ENCODE measurements at regions of chr17 and their contacts with region 1.

Region 1: GRCh38 chr17:76671123-76671911 is 27.8 kb upstream of the ST6GALNAC1 start:
- DNase-seq: peak; percentile 100
- ATAC-seq: peak; percentile 97 to 99
- H3K4me3 ChIP-seq: peak overlapping the region; percentile 54
- H3K27ac ChIP-seq: peak overlapping the region; percentile 85 to 91
- H3K4me1 ChIP-seq: peaks cover 15% of the 10 kb centered on the region
- CTCF ChIP-seq: no peak
- EP300 ChIP-seq: no peak
- POLR2A ChIP-seq: peak; percentile 66
- RAD21 ChIP-seq: no peak

Region 2: GRCh38 chr17:76720976-76721375 is 49.7 kb after region 1 on chr17:
- CTCF ChIA-PET with region 1: no interaction called
- POLR2A ChIA-PET with region 1: no interaction called
- DNase-seq: no peak
- ATAC-seq: no peak
- H3K4me3 ChIP-seq: no peak overlapping the region
- H3K27ac ChIP-seq: no peak overlapping the region
- H3K4me1 ChIP-seq: peaks cover 8% of the 10 kb centered on the region; the same call in 2 of the 3 replicates
- CTCF ChIP-seq: no peak
- EP300 ChIP-seq: no peak
- POLR2A ChIP-seq: no peak
- RAD21 ChIP-seq: no peak

Region 3: DNA sequence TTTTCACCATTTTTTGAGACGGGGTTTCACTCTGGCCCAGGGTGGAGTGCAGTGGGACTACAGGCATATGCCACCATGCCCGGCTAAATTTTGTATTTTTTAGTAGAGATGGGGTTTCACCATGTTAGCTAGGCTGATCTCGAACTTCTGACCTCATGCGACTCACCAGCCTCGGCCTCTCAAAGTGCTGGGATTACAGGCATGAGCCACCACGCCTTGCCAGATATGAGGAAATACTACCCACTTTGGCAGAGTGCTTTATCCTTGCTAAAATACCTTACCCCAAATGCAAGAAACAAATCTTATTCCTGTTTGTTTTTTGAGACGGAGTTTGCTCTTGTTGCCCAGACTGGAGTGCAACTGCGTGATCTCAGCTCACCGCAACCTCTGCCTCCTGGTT is 134.0 kb after region 1 on chr17:
- CTCF ChIA-PET with region 1: no interaction called
- POLR2A ChIA-PET with region 1: no interaction called
- DNase-seq: peak in 1 of 2 experiments; percentile 47
- ATAC-seq: peak in 1 of 2 experiments; percentile 42; a peak in 1 of 6 replicates
- H3K4me3 ChIP-seq: no peak overlapping the region
- H3K27ac ChIP-seq: peak overlapping the region in 1 of 2 experiments; percentile 33; a peak in 1 of 6 replicates
- H3K4me1 ChIP-seq: peaks cover 8% of the 10 kb centered on the region; the same call in 2 of the 3 replicates
- CTCF ChIP-seq: no peak
- EP300 ChIP-seq: no peak
- POLR2A ChIP-seq: no peak
- RAD21 ChIP-seq: no peak

Region 4: DNA sequence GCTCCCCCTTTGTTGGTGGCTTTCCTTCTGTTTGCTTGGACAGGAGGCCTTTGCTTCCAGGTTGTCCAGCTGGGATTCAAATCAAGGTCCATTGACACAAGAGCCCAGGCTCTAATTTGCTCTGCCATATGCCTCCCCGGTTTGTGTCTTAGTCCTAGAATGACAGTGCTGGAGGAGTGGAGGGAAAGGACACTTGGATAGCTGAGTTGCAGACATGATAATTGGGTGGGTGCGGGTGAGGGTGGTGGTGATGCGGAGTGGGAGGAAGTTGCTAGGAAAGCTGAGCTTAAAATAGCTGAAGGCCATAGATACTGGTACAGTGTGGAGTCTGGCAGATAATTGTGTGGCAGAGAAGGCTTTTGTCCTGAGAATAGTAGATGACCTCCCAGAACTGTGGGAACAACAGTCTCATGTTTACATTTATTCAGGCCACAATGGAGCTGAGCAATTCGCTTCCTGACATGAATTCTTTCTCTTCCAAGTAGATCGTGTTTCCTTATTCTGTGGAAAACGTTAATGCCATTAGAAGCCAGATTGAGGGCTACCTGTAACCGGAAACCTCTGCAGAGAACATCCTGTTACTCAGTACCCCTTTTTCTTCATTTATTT is 493.3 kb after region 1 on chr17:
- CTCF ChIA-PET with region 1: no interaction called
- POLR2A ChIA-PET with region 1: interaction called, 10 read pairs
- DNase-seq: no peak
- ATAC-seq: no peak
- H3K4me3 ChIP-seq: no peak overlapping the region
- H3K27ac ChIP-seq: no peak overlapping the region
- H3K4me1 ChIP-seq: peaks cover 20% of the 10 kb centered on the region
- CTCF ChIP-seq: no peak
- EP300 ChIP-seq: no peak
- POLR2A ChIP-seq: no peak
- RAD21 ChIP-seq: no peak